ENCODE measurements at regions of chr2 and their contacts with region 1.

Region 1: GRCh38 chr2:60550178-60550983 is 3.1 kb downstream of the BCL11A start:
- DNase-seq: peak; percentile 91
- H3K4me3 ChIP-seq: peak overlapping the region; percentile 73
- H3K27ac ChIP-seq: peak overlapping the region; percentile 78
- H3K4me1 ChIP-seq: peaks cover 8% of the 10 kb centered on the region
- H3K27me3 ChIP-seq: no peaks in the 10 kb centered on the region
- CTCF ChIP-seq: peak; percentile 50

Region 2: GRCh38 chr2:60213865-60214625 is 336.3 kb before region 1 on chr2:
- intact Hi-C with region 1: loop called (anchors 10 kb)
- DNase-seq: peak; percentile 80
- H3K4me3 ChIP-seq: peak overlapping the region; percentile 14
- H3K27ac ChIP-seq: peak overlapping the region; percentile 66
- H3K4me1 ChIP-seq: no peaks in the 10 kb centered on the region
- H3K27me3 ChIP-seq: no peaks in the 10 kb centered on the region
- CTCF ChIP-seq: no peak

Region 3: GRCh38 chr2:60411295-60411694 is 139.1 kb before region 1 on chr2:
- intact Hi-C with region 1: no loop called
- DNase-seq: no peak
- H3K4me3 ChIP-seq: no peak overlapping the region
- H3K27ac ChIP-seq: no peak overlapping the region
- H3K4me1 ChIP-seq: no peaks in the 10 kb centered on the region
- H3K27me3 ChIP-seq: no peaks in the 10 kb centered on the region
- CTCF ChIP-seq: no peak

Region 4: DNA sequence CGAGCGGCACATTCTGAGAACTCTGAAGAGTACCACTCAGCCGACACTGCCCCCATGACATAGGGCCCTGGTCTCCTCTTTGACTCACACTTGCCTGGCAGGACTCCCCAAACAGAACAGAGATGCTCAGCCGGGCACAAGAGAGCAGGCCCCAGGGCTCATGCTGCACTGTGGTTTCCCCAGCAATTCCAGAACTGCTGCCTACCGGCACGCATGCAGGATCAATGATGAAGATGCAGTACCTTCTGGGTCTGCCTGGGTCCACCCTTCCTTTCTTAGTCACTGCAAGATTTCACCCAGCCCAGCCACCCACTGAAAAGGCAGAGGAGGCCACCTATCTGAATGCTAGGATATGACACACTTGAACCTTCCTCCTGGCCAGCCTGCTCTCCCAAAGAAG is 46.3 kb before region 1 on chr2:
- intact Hi-C with region 1: no loop called
- DNase-seq: no peak
- H3K4me3 ChIP-seq: no peak overlapping the region
- H3K27ac ChIP-seq: no peak overlapping the region
- H3K4me1 ChIP-seq: no peaks in the 10 kb centered on the region
- H3K27me3 ChIP-seq: no peaks in the 10 kb centered on the region
- CTCF ChIP-seq: no peak